Tibial artery (tissue), 4 donors: ENCODE measurements at regions of chr1 and their contacts with region 1.

Region 1: GRCh38 chr1:210311726-210312493 is 16.8 kb upstream of the HHAT start:
- DNase-seq: no peak
- H3K4me3 ChIP-seq: peak overlapping the region; percentile 42 to 53
- H3K27ac ChIP-seq: peak overlapping the region; percentile 53 to 69
- H3K4me1 ChIP-seq: peaks cover 0 to 18% (median 11%) of the 10 kb centered on the region in 4 donors
- H3K27me3 ChIP-seq: no peaks in the 10 kb centered on the region
- CTCF ChIP-seq: no peak

Region 2: DNA sequence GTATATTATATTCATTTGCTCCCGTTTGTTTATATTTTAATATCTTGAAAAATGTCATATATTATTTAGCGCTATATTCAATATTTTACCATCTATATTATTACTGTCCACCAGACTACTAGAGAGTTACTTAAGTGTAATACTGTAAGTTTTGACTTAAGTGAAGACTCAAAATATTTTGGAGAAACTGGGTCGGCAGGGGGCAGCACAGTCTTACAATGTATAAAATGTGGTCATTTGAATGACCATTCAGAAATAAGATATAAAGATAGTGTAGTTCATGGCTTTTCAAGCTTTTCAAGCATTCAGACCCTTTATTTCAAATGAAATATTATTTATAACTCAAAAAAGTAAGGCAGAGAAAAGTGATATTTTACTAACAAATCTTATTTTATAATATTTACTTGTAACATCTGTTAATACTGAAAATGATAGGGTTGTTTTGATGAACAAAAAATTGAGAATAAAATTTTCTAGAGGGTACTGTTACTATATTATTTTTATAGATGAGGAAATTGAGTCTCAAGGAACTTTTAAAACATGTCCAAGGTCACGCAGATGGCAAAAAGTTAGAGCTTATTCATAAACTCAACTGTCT is 168.3 kb before region 1 on chr1:
- intact Hi-C with region 1: loop called (anchors 2 kb)
- DNase-seq: peak; percentile 77 to 80
- H3K4me3 ChIP-seq: no peak overlapping the region
- H3K27ac ChIP-seq: no peak overlapping the region
- H3K4me1 ChIP-seq: no peaks in the 10 kb centered on the region
- H3K27me3 ChIP-seq: no peaks in the 10 kb centered on the region
- CTCF ChIP-seq: peak; percentile 60 to 74

Region 3: DNA sequence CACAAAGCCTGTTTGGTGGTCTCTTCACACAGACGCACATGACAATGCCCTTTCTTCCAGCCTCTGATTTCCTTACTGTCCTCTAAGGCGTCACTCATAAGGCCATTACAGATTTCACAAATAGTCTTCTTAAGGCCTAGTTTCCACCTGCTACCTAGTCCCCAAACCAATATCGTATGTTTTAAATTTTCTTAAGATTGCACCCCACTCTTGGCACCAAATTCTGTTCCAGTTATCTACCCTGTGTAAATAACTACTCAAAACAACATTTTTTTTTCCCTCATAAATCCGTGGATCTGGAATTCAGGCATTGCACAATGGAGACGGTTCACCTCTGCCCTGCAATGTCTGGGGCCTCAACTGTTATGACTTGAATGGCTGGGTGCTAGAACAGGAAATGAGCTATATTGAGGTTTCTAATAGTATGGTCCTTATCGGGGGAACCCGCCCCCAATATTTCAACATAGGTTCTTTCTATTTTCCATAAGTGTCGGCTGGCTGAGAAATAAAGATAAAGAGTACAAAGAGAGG is 116.2 kb before region 1 on chr1:
- intact Hi-C with region 1: loop called (anchors 5 kb)
- DNase-seq: no peak
- H3K4me3 ChIP-seq: no peak overlapping the region
- H3K27ac ChIP-seq: no peak overlapping the region
- H3K4me1 ChIP-seq: no peaks in the 10 kb centered on the region
- H3K27me3 ChIP-seq: no peaks in the 10 kb centered on the region
- CTCF ChIP-seq: no peak